Common myeloid progenitor, CD34-positive (primary cell): ENCODE measurements at regions of chr19 and their contacts with region 1.

Region 1: GRCh38 chr19:38634757-38635482 is 12.5 kb upstream of the ACTN4 start:
- DNase-seq: peak; percentile 58 to 72 (median 66)
- H3K4me3 ChIP-seq: no peak overlapping the region
- H3K27ac ChIP-seq: no peak overlapping the region
- H3K4me1 ChIP-seq: peaks cover 3 to 11% (median 7%) of the 10 kb centered on the region in 4 experiments
- H3K27me3 ChIP-seq: no peaks in the 10 kb centered on the region

Region 2: DNA sequence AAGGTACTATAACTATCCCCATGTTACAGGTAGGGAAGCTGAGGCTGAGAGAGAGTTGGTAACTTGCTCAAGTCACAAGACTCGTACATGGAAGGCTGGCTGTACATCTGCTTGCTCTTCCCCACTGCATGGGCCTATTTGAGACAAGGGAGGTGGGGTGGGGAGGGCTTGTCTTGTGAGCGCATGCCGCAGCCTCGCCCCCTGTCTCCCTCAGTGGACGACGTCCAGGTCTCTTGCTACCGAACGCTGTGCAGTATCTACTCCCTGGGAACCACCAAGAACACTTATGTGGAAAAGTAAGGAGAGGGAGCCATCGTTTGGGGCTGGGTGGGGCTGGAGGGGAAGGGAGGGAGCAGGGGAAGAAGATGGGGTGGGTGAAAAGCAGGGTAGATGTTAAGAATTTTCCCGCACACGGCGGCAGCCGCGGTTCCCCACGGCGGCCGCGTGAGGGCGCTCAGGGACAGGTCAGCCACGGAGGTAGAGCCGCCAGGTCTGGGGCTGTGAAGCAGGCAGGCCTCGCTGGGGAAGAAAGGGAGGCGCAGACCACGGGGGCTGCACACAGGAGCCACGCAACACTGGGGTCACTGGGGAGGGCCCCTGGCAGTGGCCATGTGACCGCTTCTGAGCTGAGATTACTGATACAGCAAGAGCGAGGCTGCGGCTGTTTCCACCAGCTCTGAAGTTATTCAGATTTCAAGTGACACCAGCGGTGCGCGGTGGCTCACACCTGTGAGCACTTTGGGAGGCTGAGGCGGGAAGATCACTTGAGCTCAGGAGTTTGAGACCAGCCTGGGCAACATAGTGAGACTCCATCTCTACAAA is 119.9 kb before region 1 on chr19:
- CTCF ChIA-PET with region 1: interaction called, 10 read pairs
- POLR2A ChIA-PET with region 1: no interaction called
- DNase-seq: peak; percentile 50 to 78 (median 75)
- H3K4me3 ChIP-seq: no peak overlapping the region
- H3K27ac ChIP-seq: no peak overlapping the region
- H3K4me1 ChIP-seq: peaks cover 0 to 6% (median 0%) of the 10 kb centered on the region in 4 experiments
- H3K27me3 ChIP-seq: peaks cover 0 to 1% (median 0%) of the 10 kb centered on the region in 5 experiments

Region 3: GRCh38 chr19:38564981-38565690 is 69.8 kb before region 1 on chr19:
- CTCF ChIA-PET with region 1: no interaction called
- POLR2A ChIA-PET with region 1: no interaction called
- DNase-seq: peak in 2 of 3 donors; percentile 43 to 58
- H3K4me3 ChIP-seq: peak overlapping the region in 2 of 7 experiments; percentile 56 to 59
- H3K27ac ChIP-seq: no peak overlapping the region
- H3K4me1 ChIP-seq: peaks cover 0 to 9% (median 8%) of the 10 kb centered on the region in 4 experiments
- H3K27me3 ChIP-seq: peaks cover 0 to 37% (median 10%) of the 10 kb centered on the region in 5 experiments

Region 4: GRCh38 chr19:38618590-38619360 is 16.1 kb before region 1 on chr19 and contains the start of gene EIF3K:
- CTCF ChIA-PET with region 1: interaction called, 31 read pairs
- POLR2A ChIA-PET with region 1: no interaction called
- DNase-seq: peak; percentile 98 to 99 (median 98)
- H3K4me3 ChIP-seq: peak within 1 kb of the TSS; percentile 85 to 98 (median 96)
- H3K27ac ChIP-seq: peak within 1 kb of the TSS; percentile 93 to 97
- H3K4me1 ChIP-seq: peaks cover 2 to 36% (median 25%) of the 10 kb centered on the region in 4 experiments
- H3K27me3 ChIP-seq: no peaks in the 10 kb centered on the region

Region 5: DNA sequence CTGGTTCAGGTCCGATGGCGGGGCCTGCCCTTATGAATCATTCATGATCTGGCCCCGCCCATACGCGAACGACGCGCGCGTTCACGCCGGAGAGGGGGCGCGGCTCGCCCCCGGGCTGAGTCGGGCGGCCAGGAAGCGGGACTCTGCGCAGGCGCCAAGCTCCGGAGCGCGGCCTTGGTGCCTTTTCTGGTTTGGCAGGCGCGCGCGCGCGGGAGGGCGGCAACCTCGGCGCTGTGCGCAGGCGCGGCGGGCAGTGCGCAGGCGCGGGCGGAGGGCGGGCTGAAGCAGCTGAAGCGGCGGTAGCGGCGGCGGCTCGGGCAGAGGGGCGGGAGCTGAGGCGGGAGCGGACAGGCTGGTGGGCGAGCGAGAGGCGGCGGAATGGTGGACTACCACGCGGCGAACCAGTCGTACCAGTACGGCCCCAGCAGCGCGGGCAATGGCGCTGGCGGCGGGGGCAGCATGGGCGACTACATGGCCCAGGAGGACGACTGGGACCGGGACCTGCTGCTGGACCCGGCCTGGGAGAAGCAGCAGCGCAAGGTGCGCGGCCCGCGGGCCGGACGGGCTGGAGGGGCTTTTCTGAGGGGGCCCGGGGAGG is 12.5 kb after region 1 on chr19 and contains the start of gene ACTN4:
- CTCF ChIA-PET with region 1: interaction called, 10 read pairs
- POLR2A ChIA-PET with region 1: no interaction called
- DNase-seq: peak; percentile 96 to 98 (median 98)
- H3K4me3 ChIP-seq: peak within 1 kb of the TSS; percentile 86 to 99 (median 95)
- H3K27ac ChIP-seq: peak within 1 kb of the TSS; percentile 54 to 88
- H3K4me1 ChIP-seq: peaks cover 14 to 49% (median 38%) of the 10 kb centered on the region in 4 experiments
- H3K27me3 ChIP-seq: no peaks in the 10 kb centered on the region